ENCODE measurements at regions of chr5 and their contacts with region 1.

Region 1: DNA sequence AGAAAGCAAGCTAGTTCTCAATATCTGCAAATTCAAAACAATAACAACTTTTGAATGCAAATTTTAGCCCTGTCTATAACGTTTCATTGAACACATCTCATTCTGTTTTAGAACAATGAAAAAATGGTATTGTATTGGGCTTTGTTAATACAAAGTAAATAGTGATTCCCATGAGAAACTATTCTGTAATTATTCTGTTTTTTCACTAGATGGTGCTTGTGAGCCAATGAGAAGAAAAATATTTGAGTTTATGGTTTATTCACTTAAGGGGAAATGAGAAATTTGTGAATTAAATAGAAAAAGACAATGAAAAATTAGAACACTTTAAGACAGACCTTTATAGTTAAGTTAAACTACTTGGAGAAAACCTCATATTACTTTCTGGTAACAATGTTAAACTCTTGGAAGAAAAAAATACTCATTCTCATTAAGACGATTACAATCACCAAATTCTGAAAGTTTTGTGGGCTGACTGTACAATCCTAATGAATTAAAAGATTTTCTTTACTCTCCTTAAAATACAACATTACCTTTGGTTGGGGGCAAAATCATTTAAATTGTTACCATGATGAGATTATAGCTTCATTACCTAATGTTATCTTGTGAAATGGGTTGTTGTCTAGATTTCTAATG is 127.0 kb downstream of the NNT start:
- DNase-seq: no peak
- H3K4me3 ChIP-seq: no peak overlapping the region
- H3K27ac ChIP-seq: no peak overlapping the region
- H3K4me1 ChIP-seq: no peaks in the 10 kb centered on the region
- H3K27me3 ChIP-seq: no peaks in the 10 kb centered on the region
- CTCF ChIP-seq: peak in 6 of 11 experiments; percentile 26 to 53 (median 35)
- POLR2A ChIP-seq: no peak

Region 2: DNA sequence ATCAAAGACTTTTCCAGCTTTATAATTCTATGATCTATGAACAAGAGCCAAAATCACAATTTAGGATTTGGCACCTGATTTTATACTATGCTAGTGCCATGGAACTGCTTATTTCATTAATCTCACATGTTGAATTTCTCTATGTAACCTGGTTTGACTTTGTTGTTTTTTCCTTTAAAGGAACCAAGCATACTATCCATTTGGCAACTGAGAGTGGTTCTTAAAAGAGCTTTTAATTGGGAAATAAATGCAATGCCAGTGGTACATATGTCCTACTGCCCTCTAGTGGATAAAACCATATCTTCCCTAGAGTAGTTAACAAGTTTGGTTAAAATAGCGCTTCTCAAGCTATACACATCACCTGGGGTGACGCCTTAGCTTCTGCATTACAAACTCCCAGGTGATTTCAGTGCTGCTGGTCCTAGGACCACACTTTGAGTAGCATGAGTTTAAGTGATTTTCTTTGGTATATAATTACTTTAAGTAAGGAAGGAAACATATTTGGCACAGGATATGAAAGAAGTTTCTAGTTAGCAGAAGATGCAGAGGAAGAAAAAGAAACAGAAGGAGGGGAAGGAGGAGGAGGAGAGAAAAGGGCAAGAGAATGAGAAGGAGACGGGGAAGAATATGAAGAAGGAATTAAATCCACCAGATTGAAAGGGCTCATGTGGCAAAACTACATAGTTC is 602.5 kb after region 1 on chr5:
- intact Hi-C with region 1: loop called (anchors 5 kb)
- DNase-seq: no peak
- H3K4me3 ChIP-seq: no peak overlapping the region
- H3K27ac ChIP-seq: no peak overlapping the region
- H3K4me1 ChIP-seq: no peaks in the 10 kb centered on the region
- H3K27me3 ChIP-seq: no peaks in the 10 kb centered on the region
- CTCF ChIP-seq: peak in 7 of 11 experiments; percentile 20 to 48 (median 30)
- POLR2A ChIP-seq: no peak

Region 3: DNA sequence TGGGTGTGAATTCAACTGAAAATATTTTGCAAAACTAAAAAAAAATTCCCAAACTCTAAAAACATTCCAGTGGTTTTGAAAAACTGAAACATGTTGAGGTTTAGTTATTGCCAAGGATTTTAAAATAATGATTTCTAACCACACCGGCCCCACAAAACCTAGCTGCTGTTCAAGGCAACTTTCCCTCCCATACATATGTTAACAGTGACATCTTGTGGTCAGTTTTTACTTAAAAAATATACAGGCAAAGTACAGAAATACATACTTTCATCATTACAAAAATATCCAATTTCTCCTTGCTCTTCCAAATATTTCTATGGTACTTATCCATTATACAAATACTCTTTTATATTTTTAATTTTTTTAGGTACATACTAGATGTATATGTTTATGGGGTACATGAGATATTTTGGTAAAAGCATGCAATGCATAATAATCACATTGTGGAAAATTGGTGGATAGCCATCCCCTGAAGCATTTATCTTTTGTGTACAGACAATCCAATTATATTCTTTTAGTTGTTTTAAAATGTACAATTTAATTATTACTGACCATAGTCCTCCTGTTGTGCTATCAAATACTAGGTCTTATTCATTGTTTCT is 1044.4 kb after region 1 on chr5:
- intact Hi-C with region 1: loop called (anchors 5 kb)
- DNase-seq: no peak
- H3K4me3 ChIP-seq: no peak overlapping the region
- H3K27ac ChIP-seq: no peak overlapping the region
- H3K4me1 ChIP-seq: no peaks in the 10 kb centered on the region
- H3K27me3 ChIP-seq: no peaks in the 10 kb centered on the region
- CTCF ChIP-seq: peak in 8 of 11 experiments; percentile 16 to 52 (median 27)
- POLR2A ChIP-seq: no peak